Caco-2 (cell line): ENCODE measurements at regions of chr10 and their contacts with region 1.

Region 1: DNA sequence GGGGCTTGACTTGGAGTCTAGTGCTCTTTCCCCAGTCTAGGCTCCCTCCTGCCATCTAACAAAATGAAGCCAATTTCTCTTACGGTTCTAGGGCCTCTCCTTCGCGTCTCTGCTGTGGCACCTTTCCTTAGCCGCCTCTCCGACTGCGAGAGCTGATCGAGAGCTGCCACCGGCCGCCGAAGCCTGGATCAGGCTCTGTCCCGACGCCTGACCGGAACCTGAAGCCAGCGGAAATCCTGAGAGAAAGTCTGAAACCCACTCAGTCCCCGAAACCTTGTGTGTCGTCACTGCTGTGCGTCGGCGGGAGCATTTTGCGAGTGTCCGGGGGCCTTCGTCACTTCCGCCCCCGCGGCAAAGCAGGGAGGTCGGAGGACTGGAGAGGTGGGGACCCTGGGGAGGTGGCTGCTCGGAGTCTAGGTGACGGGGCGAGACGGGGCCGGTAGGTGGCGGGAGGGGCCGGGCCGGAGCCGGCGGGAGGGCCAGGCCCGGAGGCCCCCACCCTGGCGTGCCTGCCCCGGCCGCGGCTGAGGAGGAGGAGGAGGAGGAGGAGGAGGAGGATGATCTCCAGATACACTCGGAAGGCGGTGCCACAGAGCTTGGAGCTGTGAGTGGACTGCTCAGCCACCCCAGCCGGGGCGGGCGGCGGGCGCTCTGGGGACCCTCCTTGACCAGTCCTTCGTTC is at the starts of genes ECD and FAM149B1:
- DNase-seq: peak; percentile 98 to 99
- H3K4me3 ChIP-seq: peak within 1 kb of the TSS; percentile 82
- H3K4me3 Mint-ChIP-seq: peak within 1 kb of the TSS; percentile 94
- H3K27ac Mint-ChIP-seq: peak within 1 kb of the TSS; percentile 98
- H3K4me1 ChIP-seq: peaks cover 10% of the 10 kb centered on the region; the same call in 1 of the 2 replicates
- H3K4me1 Mint-ChIP-seq: peaks cover 14% of the 10 kb centered on the region
- H3K27me3 ChIP-seq: no peaks in the 10 kb centered on the region
- H3K27me3 Mint-ChIP-seq: no peaks in the 10 kb centered on the region
- CTCF ChIP-seq: peak; percentile 55 to 65
- total RNA-seq, gene ECD: 51.8 and 52.6 TPM in 2 replicates
- total RNA-seq, gene FAM149B1: 13.2 and 14.1 TPM in 2 replicates

Region 2: GRCh38 chr10:73110345-73110849 is 57.5 kb before region 1 on chr10 and contains the start of gene NUDT13:
- CTCF ChIA-PET with region 1: no interaction called
- POLR2A ChIA-PET with region 1: interaction called, 3 read pairs
- intact Hi-C with region 1: loop called (anchors 5 kb)
- DNase-seq: peak; percentile 84 to 86
- H3K4me3 ChIP-seq: peak within 1 kb of the TSS; percentile 52
- H3K4me3 Mint-ChIP-seq: peak within 1 kb of the TSS; percentile 85
- H3K27ac Mint-ChIP-seq: peak within 1 kb of the TSS; percentile 90
- H3K4me1 ChIP-seq: peaks cover 11% of the 10 kb centered on the region
- H3K4me1 Mint-ChIP-seq: no peaks in the 10 kb centered on the region
- H3K27me3 ChIP-seq: no peaks in the 10 kb centered on the region
- H3K27me3 Mint-ChIP-seq: no peaks in the 10 kb centered on the region
- CTCF ChIP-seq: no peak
- total RNA-seq, gene NUDT13: 6.5 and 7.1 TPM in 2 replicates

Region 3: DNA sequence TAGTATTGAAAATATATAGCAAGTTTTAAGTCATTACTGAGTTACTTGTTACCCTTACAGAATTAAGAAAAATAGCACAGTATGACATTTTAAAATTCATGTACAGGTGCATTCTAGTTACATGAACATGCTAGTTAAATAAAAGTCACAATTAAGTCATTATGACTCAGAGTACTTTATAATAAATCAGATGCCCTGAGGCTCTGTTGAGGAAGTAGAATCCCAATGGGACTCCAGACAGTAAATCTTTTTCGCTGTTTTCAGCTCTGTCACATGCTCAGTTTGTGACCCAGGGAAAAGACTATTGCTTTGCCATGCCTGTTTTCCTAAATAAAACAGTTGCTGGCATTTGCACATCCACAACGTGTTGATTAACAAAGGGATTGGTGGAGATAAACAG is 36.6 kb before region 1 on chr10:
- CTCF ChIA-PET with region 1: no interaction called
- POLR2A ChIA-PET with region 1: no interaction called
- intact Hi-C with region 1: loop called (anchors 5 kb)
- DNase-seq: no peak
- H3K4me3 ChIP-seq: no peak overlapping the region
- H3K4me3 Mint-ChIP-seq: no peak overlapping the region
- H3K27ac Mint-ChIP-seq: no peak overlapping the region
- H3K4me1 ChIP-seq: peaks cover 32% of the 10 kb centered on the region
- H3K4me1 Mint-ChIP-seq: peaks cover 20% of the 10 kb centered on the region
- H3K27me3 ChIP-seq: no peaks in the 10 kb centered on the region
- H3K27me3 Mint-ChIP-seq: no peaks in the 10 kb centered on the region
- CTCF ChIP-seq: no peak

Region 4: DNA sequence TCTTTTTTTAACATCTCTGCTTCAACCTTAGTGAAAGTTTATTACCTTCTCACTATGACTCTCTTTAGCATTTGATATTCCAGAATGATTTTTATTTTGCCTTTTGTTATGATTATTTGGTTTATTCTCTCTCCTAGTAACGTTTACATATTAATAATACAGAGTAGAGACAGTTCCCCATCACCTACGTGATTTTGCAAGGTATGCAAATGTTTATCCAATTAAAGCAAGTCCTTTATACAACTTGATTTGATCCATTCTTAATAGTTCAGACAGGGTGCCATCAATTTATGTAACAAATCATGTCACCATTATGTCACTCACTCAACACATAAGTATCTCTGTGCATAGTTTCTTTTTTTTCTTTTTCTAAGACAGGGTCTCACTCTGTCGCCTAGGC is 26.3 kb before region 1 on chr10:
- CTCF ChIA-PET with region 1: no interaction called
- POLR2A ChIA-PET with region 1: no interaction called
- intact Hi-C with region 1: no loop called
- DNase-seq: no peak
- H3K4me3 ChIP-seq: no peak overlapping the region
- H3K4me3 Mint-ChIP-seq: no peak overlapping the region
- H3K27ac Mint-ChIP-seq: no peak overlapping the region
- H3K4me1 ChIP-seq: peaks cover under 1% of the 10 kb centered on the region
- H3K4me1 Mint-ChIP-seq: peaks cover 8% of the 10 kb centered on the region
- H3K27me3 ChIP-seq: no peaks in the 10 kb centered on the region
- H3K27me3 Mint-ChIP-seq: no peaks in the 10 kb centered on the region
- CTCF ChIP-seq: no peak

Region 5: GRCh38 chr10:73190188-73190587 is 22.3 kb after region 1 on chr10:
- CTCF ChIA-PET with region 1: no interaction called
- POLR2A ChIA-PET with region 1: no interaction called
- intact Hi-C with region 1: no loop called
- DNase-seq: no peak
- H3K4me3 ChIP-seq: no peak overlapping the region
- H3K4me3 Mint-ChIP-seq: no peak overlapping the region
- H3K27ac Mint-ChIP-seq: no peak overlapping the region
- H3K4me1 ChIP-seq: no peaks in the 10 kb centered on the region
- H3K4me1 Mint-ChIP-seq: no peaks in the 10 kb centered on the region
- H3K27me3 ChIP-seq: no peaks in the 10 kb centered on the region
- H3K27me3 Mint-ChIP-seq: no peaks in the 10 kb centered on the region
- CTCF ChIP-seq: no peak

Region 6: DNA sequence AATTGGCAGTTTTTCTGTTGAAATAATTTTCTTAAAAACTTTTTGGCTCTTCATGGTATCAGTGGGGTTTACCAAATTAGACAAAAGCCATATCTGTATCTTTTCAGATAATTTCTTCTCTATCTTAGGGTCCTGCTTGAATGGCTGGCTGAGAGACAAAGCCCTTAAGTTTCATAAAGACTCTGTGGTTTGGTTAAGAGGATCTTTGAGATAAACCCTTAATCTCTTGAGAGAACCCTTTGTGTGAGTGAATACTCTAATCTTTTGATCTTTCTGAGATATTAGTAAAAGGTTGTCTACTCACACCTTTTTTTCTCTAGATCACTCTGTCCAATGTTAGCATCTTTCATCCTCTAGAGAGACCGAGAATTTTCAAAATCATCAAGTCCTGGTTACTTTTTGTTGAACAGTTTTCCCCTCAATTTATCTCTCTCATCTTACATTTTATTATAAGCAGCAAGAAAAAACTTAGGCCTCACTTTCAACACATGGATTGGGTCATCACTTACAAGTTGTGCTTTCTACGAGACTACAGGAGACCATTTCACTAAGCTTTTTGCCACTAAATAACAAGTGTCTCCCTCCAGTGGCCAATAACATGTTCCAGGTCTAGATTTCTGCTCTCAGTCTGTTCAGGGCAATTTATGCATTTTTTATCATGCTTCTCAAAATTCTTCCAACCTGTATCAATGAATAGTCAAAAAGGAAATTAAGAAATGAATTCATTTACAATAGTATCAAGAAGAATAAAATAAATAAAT is 50.7 kb after region 1 on chr10:
- CTCF ChIA-PET with region 1: interaction called, 7 read pairs
- POLR2A ChIA-PET with region 1: interaction called, 15 read pairs
- intact Hi-C with region 1: loop called (anchors 1 kb)
- DNase-seq: peak in 1 of 2 experiments; percentile 60
- H3K4me3 ChIP-seq: no peak overlapping the region
- H3K4me3 Mint-ChIP-seq: no peak overlapping the region
- H3K27ac Mint-ChIP-seq: peak overlapping the region; percentile 82
- H3K4me1 ChIP-seq: peaks cover 25% of the 10 kb centered on the region
- H3K4me1 Mint-ChIP-seq: peaks cover 22% of the 10 kb centered on the region
- H3K27me3 ChIP-seq: no peaks in the 10 kb centered on the region
- H3K27me3 Mint-ChIP-seq: no peaks in the 10 kb centered on the region
- CTCF ChIP-seq: peak; percentile 61 to 74

Region 7: GRCh38 chr10:73246783-73247508 is 79.0 kb after region 1 on chr10 and contains the start of gene DNAJC9:
- CTCF ChIA-PET with region 1: interaction called, 6 read pairs
- POLR2A ChIA-PET with region 1: interaction called, 29 read pairs
- intact Hi-C with region 1: loop called (anchors 1 kb)
- DNase-seq: peak; percentile 99 to 100
- H3K4me3 ChIP-seq: peak within 1 kb of the TSS; percentile 86
- H3K4me3 Mint-ChIP-seq: peak within 1 kb of the TSS; percentile 99
- H3K27ac Mint-ChIP-seq: peak within 1 kb of the TSS; percentile 100
- H3K4me1 ChIP-seq: 0 out of 2 replicates have a peak, but pooled peaks cover 13% of the 10 kb centered on the region
- H3K4me1 Mint-ChIP-seq: peaks cover 43% of the 10 kb centered on the region
- H3K27me3 ChIP-seq: no peaks in the 10 kb centered on the region
- H3K27me3 Mint-ChIP-seq: no peaks in the 10 kb centered on the region
- CTCF ChIP-seq: peak in 1 of 2 experiments; percentile 44
- total RNA-seq, gene DNAJC9: 64.4 and 65.2 TPM in 2 replicates

Region 8: DNA sequence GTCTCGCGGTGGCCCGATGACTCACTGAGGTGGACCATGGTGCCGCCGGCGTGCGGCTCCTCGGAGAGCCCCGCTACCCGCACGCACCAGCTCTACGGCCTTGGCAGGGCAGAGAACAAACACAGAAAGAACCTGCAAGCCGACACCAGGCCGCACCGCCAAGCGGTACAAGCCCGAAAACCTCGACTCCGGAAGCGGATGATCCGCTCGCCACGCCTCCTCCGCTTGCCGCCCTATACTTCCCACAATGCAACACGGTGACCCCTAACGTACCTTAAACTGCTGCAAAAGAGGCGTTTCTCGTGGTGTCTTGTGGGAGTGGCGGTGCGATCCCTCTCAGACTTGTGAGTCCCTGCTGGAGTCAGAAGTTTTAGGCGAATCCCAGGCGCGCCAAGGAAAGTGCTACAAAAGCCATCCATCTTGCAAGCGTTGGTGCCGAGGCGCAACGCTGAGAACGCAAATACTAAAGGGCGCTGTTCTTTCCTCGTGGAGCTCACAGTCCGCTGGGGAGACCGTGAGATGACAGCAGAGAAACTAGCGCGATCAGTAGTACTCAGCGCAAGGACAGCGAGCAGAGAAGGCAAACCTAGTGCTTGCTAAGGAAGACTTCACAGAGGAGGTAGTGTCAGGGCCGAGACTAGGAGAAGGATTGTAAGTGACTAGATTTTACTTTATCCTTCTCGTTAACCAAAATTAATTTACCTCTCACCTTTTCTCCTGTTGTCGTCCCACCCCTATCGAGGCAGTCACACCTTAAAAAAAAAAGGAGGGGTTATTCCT is 84.7 kb after region 1 on chr10 and contains the start of gene MRPS16:
- CTCF ChIA-PET with region 1: no interaction called
- POLR2A ChIA-PET with region 1: interaction called, 29 read pairs
- intact Hi-C with region 1: loop called (anchors 1 kb)
- DNase-seq: peak; percentile 97 to 98
- H3K4me3 ChIP-seq: peak within 1 kb of the TSS; percentile 71
- H3K4me3 Mint-ChIP-seq: peak within 1 kb of the TSS; percentile 94
- H3K27ac Mint-ChIP-seq: peak within 1 kb of the TSS; percentile 99
- H3K4me1 ChIP-seq: peaks cover 9% of the 10 kb centered on the region
- H3K4me1 Mint-ChIP-seq: peaks cover 22% of the 10 kb centered on the region
- H3K27me3 ChIP-seq: no peaks in the 10 kb centered on the region
- H3K27me3 Mint-ChIP-seq: no peaks in the 10 kb centered on the region
- CTCF ChIP-seq: no peak
- total RNA-seq, gene MRPS16: 191 and 194 TPM in 2 replicates

Region 9: DNA sequence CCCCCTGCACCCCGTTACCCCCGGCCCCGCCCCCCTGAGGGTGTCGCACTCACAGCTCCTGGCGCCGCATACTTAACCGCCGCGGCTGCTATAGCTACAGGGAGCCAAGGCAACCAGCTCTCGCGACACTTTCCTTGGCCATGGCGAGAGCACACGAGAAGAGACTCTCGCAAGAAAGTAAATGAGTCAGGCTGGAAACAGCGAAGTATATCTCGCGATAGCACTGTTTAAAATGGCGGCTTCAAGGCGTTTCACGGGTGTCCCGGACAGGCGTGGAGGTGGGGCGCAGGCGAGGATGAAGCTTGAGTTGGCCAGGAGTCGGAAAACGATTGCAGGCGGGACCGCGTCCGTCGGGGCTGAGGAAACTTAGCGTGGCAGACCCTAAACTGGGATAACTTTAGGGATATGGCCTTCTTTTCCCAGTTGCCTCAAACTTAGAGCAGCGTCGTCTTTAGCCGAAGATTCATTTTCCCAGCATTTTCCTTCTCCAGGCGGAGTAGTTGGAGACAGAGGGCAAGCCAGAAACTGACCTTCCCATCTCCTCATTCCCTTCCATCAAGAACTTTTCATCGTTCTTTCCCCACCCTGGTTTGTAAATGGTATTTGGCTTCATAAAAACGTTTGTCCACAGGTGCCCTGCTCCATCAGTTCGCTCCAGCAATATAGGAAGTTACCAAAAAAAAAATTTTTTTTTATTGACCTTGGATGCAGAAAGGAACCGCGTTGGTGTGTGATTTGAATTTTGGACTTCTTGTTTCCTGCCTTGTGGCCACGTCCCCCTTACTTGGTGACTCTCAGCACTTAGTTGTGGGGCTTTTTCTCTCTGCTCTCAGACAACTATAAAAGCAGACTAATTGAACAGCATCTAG is 458.2 kb after region 1 on chr10:
- CTCF ChIA-PET with region 1: no interaction called
- POLR2A ChIA-PET with region 1: no interaction called
- intact Hi-C with region 1: no loop called
- DNase-seq: peak; percentile 93 to 96
- H3K4me3 ChIP-seq: peak overlapping the region; percentile 84
- H3K4me3 Mint-ChIP-seq: peak overlapping the region; percentile 99
- H3K27ac Mint-ChIP-seq: peak overlapping the region; percentile 100
- H3K4me1 ChIP-seq: peaks cover 9% of the 10 kb centered on the region
- H3K4me1 Mint-ChIP-seq: no peaks in the 10 kb centered on the region
- H3K27me3 ChIP-seq: no peaks in the 10 kb centered on the region
- H3K27me3 Mint-ChIP-seq: no peaks in the 10 kb centered on the region
- CTCF ChIP-seq: no peak